AG04449 (cell line): ENCODE measurements at regions of chr1 and their contacts with region 1.

Region 1: DNA sequence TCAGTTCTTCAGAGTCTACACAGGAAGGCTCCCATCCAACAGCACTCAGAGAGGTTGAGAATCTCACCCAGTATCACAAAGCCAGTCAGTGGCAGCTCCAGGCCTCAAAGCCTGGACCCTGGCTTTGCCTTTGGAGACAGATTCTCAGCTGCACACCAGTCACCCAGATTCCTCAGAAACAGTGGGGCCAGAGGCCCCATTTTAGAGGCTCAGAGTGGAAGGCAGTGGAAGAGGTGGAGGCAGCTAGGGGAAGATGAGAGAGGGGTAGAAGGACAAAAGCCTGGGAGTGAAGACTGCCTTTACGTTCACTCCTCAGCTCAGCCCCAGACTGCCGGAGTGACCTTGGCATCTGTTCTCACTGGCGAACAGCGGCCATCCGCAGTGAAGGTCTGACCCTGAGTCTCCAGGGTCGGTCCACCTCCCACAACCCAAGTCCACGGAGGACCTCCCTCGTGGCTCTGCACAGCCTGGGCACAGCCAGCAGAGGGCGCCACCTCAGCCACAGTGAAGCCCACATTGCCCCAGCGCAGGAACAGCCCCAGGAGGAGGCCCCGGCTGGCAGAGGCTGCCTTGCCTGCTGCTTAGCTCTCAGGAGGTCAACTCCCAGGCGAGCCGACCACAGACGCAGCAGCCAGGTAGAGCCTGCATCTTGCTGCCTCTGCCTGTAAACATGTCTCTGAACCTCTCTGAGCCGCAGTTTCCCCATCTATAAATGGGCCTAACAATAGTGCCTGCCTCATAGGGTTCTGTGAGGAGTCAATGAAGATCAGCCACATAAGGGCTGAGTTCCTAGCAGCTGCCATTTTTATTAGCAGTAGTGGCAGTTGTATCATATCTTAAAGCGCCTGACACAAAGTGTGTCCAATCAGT is 5.9 kb upstream of the FNDC5 start:
- DNase-seq: no peak
- H3K4me3 ChIP-seq: no peak overlapping the region
- CTCF ChIP-seq: peak; percentile 95

Region 2: GRCh38 chr1:32400876-32401631 is 475.5 kb before region 1 on chr1:
- CTCF ChIA-PET with region 1: interaction called, 43 read pairs
- POLR2A ChIA-PET with region 1: no interaction called
- DNase-seq: peak; percentile 31
- H3K4me3 ChIP-seq: no peak overlapping the region
- CTCF ChIP-seq: peak; percentile 84

Region 3: DNA sequence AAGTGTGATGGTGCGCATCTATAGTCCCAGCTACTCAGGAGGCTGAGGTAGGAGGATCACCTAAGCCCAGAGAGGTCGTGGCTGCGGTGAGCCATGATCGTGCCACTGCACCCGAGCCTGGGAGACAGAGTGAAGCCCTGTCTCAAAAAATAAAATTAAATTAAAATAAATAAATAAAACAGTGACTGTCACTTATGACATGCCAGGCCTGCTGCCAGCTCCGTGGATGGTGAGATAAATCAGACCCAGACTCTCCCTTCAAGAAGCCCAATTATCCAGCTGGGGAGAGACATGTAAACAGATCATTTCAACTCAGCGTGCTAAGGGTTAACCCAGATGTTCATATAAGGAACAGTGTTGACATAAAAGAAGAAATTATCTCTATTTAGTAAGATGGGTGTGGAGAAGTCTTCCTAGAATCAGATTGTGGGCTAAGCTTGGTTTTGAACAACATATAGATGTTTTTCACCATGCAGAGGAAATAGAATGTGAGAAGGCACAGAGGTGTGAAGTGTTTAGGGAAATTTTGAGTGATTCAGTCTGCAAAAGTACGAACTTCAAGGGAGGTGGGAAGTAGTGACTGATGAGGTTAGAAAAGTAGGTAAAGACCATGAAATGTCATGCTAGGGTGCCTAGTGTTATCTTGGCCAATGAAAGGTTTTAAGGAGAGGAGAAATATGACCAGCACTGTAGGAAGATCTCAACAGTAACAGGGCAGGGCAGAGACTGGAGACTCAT is 77.7 kb before region 1 on chr1:
- CTCF ChIA-PET with region 1: no interaction called
- POLR2A ChIA-PET with region 1: no interaction called
- DNase-seq: no peak
- H3K4me3 ChIP-seq: no peak overlapping the region
- CTCF ChIP-seq: no peak

Region 4: GRCh38 chr1:32861904-32862695 is 14.5 kb before region 1 on chr1:
- CTCF ChIA-PET with region 1: interaction called, 112 read pairs
- POLR2A ChIA-PET with region 1: no interaction called
- DNase-seq: no peak
- H3K4me3 ChIP-seq: no peak overlapping the region
- CTCF ChIP-seq: no peak

Region 5: GRCh38 chr1:32964461-32965250 is 88.1 kb after region 1 on chr1 and contains the start of gene RNF19B:
- CTCF ChIA-PET with region 1: no interaction called
- POLR2A ChIA-PET with region 1: no interaction called
- DNase-seq: peak; percentile 26
- H3K4me3 ChIP-seq: peak within 1 kb of the TSS; percentile 87
- CTCF ChIP-seq: no peak

Region 6: GRCh38 chr1:33055210-33056008 is 178.8 kb after region 1 on chr1:
- CTCF ChIA-PET with region 1: interaction called, 45 read pairs
- POLR2A ChIA-PET with region 1: no interaction called
- DNase-seq: peak; percentile 52
- H3K4me3 ChIP-seq: no peak overlapping the region
- CTCF ChIP-seq: peak; percentile 74

Region 7: DNA sequence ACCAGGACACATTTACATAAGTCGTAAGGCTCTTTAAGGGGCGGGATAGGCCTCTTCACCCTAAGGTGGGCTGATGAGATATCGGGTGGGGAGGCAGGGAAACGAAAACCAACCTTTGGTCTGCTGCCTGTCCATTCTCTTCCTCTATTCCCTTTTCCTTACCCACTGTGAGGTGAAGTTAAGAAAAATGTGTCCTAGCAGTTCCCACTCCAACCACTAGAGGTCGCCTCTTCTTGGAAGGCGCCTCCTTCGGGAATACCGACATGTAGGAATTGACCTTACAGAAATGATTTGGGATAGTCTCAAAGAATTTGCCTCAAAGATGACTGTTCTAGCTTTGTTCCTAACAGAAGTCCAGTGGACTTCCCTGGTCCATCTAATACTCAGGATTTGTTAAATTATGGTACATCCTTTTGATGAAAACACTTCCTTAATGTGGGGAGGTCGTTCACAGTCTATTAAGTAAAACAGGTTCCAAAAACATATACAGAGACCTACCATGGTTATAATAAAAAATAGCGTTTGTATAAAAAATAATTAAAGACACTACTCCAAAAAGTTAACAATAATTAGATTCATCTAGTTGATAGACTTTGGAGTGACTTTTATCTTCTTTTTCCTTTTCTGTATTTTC is 218.5 kb after region 1 on chr1:
- CTCF ChIA-PET with region 1: interaction called, 18 read pairs
- POLR2A ChIA-PET with region 1: no interaction called
- DNase-seq: no peak
- H3K4me3 ChIP-seq: no peak overlapping the region
- CTCF ChIP-seq: peak; percentile 83